PC-9 (cell line): ENCODE measurements at regions of chr14 and their contacts with region 1.

Region 1: DNA sequence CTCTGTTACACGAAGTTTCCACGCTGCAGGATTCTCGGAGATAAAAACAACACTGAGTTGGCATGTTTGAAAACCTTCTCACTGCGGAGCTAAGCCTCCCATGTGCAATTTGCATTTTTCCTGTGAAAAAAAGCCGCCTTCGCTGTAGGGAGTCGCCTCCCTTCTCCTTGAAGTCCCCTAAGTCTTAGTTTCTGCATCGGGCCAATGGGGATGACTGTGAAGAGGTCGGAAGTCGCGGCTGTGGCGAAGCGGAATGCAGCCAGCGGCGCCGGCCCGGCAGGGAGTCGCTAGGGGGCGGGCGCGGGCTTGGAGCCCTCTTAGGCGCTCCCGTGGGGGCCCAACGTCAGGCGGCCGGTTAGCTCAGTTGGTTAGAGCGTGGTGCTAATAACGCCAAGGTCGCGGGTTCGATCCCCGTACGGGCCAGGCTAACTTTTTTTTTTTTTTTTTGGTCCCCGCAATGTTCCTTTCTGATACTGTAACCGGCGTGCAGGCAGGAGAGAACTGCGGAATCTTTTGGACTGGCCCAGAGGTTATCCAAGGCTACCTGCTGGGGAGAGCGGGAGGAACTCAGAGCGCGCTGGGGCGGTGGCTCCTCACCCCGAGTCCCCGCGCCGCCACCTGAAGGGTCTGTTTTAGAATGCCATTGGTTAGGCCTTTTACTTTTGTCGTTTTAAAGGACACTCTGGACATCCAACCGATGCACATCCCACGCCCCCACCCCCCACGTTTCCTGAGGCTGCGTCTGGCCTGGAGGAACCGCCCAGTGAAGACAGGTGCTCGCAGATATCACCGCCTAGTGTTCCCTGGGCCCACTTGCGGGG is 2.6 kb upstream of the ZNF839 start:
- DNase-seq: peak; percentile 85 to 91
- H3K4me3 ChIP-seq: peak overlapping the region; percentile 69
- H3K27ac ChIP-seq: peak overlapping the region; percentile 69
- H3K4me1 ChIP-seq: peaks cover 42% of the 10 kb centered on the region
- H3K27me3 ChIP-seq: no peaks in the 10 kb centered on the region
- CTCF ChIP-seq: peak; percentile 43

Region 2: GRCh38 chr14:102046343-102047278 is 270.3 kb before region 1 on chr14:
- CTCF ChIA-PET with region 1: interaction called, 10 read pairs
- POLR2A ChIA-PET with region 1: no interaction called
- intact Hi-C with region 1: loop called (anchors 1 kb)
- DNase-seq: peak; percentile 98 to 100
- H3K4me3 ChIP-seq: no peak overlapping the region
- H3K27ac ChIP-seq: no peak overlapping the region
- H3K4me1 ChIP-seq: peaks cover 3% of the 10 kb centered on the region
- H3K27me3 ChIP-seq: no peaks in the 10 kb centered on the region
- CTCF ChIP-seq: peak; percentile 84

Region 3: GRCh38 chr14:102235275-102235897 is 81.6 kb before region 1 on chr14:
- CTCF ChIA-PET with region 1: no interaction called
- POLR2A ChIA-PET with region 1: interaction called, 17 read pairs
- intact Hi-C with region 1: loop called (anchors 1 kb)
- DNase-seq: peak; percentile 76 to 92
- H3K4me3 ChIP-seq: no peak overlapping the region
- H3K27ac ChIP-seq: peak overlapping the region; percentile 7; the same call in 1 of the 2 replicates
- H3K4me1 ChIP-seq: peaks cover 4% of the 10 kb centered on the region
- H3K27me3 ChIP-seq: no peaks in the 10 kb centered on the region
- CTCF ChIP-seq: peak; percentile 99

Region 4: DNA sequence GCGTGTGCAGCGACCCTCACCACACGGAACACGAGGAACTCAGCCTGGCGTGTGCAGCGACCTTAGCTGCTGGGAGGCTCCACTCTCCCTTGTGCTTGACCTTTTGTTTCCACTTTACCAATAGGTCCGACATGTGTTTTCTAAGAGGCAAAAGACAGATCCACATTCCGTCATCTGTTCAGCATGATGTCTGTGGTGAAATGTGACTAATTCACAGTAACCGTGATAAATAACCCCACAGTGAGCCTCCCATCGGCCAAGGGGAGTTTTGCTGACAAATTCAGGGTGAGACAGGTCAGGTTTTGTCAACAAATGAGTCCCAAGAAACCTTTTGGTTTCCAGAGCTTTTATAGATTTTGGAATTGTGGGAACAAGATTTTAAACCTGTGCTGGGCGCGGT is 67.9 kb before region 1 on chr14:
- CTCF ChIA-PET with region 1: no interaction called
- POLR2A ChIA-PET with region 1: no interaction called
- intact Hi-C with region 1: no loop called
- DNase-seq: no peak
- H3K4me3 ChIP-seq: no peak overlapping the region
- H3K27ac ChIP-seq: no peak overlapping the region
- H3K4me1 ChIP-seq: no peaks in the 10 kb centered on the region
- H3K27me3 ChIP-seq: no peaks in the 10 kb centered on the region
- CTCF ChIP-seq: no peak

Region 5: DNA sequence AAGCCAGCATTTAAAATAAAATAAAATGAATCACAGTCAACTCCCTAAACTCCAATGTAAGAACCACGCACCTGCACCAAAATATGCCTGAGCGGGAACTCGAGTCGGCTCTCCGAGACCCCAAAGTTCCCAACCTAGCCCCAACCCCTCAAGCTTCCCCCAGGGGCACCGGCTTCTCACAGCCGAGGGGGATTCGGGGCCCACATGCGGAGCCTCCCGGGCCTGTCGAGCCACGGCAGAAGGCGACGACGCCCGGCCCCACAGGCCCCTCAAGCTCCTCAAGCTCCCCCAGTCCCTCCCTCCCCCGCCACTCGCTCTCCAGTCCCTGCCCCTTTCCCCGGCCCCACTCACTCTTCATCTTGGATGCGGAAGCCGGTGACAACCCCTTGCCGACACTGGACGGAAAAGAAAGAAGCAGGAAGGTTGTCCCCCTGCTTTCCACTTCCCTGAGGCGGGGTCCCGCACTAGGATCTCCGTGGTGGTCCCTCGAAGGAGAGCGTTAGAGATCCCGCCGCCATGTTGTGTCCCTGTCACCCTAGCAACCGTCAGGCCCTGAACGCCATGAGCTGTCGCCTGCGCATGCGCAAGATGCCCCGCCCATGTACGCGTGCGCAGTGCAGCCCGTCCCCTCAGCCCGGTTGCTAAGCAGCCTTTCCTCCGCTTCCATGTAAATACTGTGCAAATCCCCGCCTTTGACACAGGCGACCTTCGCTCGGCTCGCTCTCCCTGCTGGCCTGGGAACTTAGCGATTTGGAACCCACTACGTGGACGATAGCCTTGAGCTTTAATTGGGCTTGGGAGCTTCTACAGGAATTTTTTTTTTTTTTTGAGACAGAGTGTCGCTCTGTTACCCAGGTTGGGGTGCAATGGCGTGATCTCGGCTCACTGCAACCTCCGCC is 12.1 kb before region 1 on chr14 and contains the start of gene MOK:
- CTCF ChIA-PET with region 1: interaction called, 11 read pairs
- POLR2A ChIA-PET with region 1: interaction called, 4 read pairs
- intact Hi-C with region 1: no loop called
- DNase-seq: peak; percentile 94 to 96
- H3K4me3 ChIP-seq: peak within 1 kb of the TSS; percentile 83
- H3K27ac ChIP-seq: peak within 1 kb of the TSS; percentile 20; the same call in 1 of the 2 replicates
- H3K4me1 ChIP-seq: peaks cover 11% of the 10 kb centered on the region
- H3K27me3 ChIP-seq: no peaks in the 10 kb centered on the region
- CTCF ChIP-seq: no peak
- total RNA-seq, gene MOK: 72.1 and 74.3 TPM in 2 replicates

Region 6: GRCh38 chr14:102509744-102510615 is 193.0 kb after region 1 on chr14 and contains the start of gene ANKRD9:
- CTCF ChIA-PET with region 1: no interaction called
- POLR2A ChIA-PET with region 1: no interaction called
- intact Hi-C with region 1: loop called (anchors 5 kb)
- DNase-seq: peak; percentile 91 to 99
- H3K4me3 ChIP-seq: peak within 1 kb of the TSS; percentile 91
- H3K27ac ChIP-seq: peak within 1 kb of the TSS; percentile 24
- H3K4me1 ChIP-seq: peaks cover 31% of the 10 kb centered on the region
- H3K27me3 ChIP-seq: no peaks in the 10 kb centered on the region
- CTCF ChIP-seq: no peak
- total RNA-seq, gene ANKRD9: 44.6 and 68.8 TPM in 2 replicates